Left colon (tissue), 2 donors: ENCODE measurements at regions of chr16 and their contacts with region 1.

Region 1: DNA sequence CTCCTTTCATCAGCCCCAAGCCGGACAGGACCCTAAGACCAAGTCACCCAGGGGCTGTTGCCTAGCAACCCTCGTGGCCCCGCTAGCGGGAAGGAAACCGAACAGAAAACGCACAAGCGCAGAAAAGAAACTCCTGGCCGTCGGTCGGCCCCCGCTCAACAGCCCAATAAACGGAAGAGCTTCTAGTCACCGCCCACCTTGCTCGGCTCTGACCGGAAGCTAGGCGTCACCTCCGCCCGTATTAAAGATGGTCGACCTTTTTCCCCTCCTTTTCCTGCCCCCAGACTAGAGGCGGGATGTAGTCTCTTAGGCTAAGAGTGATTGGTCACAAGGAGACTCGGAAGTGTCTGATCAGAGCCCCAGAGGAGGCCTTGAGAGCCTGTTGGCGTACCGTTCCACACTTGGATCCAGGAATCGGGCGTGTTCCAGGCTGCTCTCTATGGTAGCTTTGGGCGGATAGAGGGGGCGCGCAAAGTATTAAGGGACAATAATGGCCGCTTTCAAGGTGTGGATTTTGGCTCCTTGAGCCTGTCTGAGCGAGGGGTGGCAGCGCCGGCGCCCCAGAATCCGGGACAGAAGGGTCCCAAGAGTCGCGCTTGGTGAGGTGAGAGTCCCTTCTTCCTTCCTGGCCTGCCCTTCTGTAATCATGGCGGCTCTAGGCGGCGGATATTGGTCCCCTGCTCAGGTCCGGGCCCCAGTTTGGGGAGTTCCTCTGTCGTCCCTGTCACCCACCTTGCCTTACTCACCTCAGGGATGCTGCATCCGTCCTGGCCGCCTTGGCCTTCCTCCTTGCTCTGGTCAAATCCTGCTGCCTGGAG is at the starts of genes DHX38 and TXNL4B:
- DNase-seq: peak; percentile 93 to 96
- ATAC-seq: peak; percentile 96
- total RNA-seq, gene DHX38: 52.0 to 61.5 TPM
- total RNA-seq, gene TXNL4B: 8.8 to 10.4 TPM

Region 2: GRCh38 chr16:71943887-71944286 is 149.8 kb before region 1 on chr16:
- intact Hi-C with region 1: no loop called
- DNase-seq: no peak
- ATAC-seq: no peak

Region 3: GRCh38 chr16:72013389-72013788 is 80.3 kb before region 1 on chr16:
- intact Hi-C with region 1: loop called in 1 of 2 experiments (anchors 10 kb)
- DNase-seq: no peak
- ATAC-seq: no peak